Naive thymus-derived CD8-positive, alpha-beta T cell (primary cell): ENCODE measurements at regions of chr19 and their contacts with region 1.

Region 1: DNA sequence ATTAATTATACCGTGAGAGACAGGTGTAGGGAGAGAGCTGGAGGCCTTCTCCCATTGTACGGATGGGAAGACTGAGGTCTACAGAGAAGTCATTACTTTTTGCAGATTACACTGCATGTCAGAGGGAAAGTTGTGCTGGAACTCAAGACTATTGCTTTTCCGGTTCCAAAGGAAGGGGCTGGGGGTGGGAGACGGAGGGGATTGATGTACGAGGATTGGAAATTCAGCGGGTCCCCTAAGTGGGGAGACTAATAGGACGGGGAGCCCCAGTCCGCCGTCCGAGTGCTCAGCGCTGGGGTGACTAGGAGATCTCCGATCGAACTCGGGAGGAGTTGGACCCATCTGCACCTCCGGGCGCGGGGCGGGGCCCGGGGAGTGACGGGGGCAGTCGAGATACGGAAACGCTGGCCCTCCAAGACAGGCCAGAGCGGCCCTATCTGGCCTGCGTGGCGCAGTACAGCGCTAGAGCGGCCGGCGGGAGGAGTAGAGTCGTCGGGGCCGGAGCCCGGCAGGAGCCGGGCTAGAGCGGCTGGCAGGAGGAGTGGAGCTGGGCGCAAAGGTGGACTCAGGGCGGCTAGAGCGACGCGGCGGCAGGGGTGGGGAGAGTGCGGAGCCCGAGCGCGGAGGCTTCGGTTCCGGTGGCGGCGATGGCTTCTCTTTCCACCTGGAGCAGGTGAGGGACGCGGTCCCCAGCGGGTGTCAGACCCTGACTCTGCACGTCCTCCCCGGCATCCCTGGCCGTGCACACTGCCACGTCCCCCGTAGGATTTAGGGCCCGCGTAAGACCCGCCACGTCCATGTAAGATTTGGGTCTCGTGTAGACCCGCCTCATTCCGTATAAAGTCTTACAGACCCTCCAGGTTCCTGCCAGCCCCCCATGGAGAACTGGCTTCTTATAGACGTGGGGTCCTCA is 1.1 kb downstream of the ARHGEF1 start:
- DNase-seq: peak; percentile 72 to 94 (median 84)
- ATAC-seq: peak; percentile 46 to 51
- H3K4me3 Mint-ChIP-seq: peak overlapping the region; percentile 94 to 99 (median 97)
- H3K27ac Mint-ChIP-seq: peak overlapping the region; percentile 94 to 100 (median 99)
- H3K4me1 Mint-ChIP-seq: peaks cover 35 to 72% (median 49%) of the 10 kb centered on the region in 4 donors
- H3K27me3 Mint-ChIP-seq: peaks cover 0 to 1% (median 0%) of the 10 kb centered on the region in 5 donors

Region 2: DNA sequence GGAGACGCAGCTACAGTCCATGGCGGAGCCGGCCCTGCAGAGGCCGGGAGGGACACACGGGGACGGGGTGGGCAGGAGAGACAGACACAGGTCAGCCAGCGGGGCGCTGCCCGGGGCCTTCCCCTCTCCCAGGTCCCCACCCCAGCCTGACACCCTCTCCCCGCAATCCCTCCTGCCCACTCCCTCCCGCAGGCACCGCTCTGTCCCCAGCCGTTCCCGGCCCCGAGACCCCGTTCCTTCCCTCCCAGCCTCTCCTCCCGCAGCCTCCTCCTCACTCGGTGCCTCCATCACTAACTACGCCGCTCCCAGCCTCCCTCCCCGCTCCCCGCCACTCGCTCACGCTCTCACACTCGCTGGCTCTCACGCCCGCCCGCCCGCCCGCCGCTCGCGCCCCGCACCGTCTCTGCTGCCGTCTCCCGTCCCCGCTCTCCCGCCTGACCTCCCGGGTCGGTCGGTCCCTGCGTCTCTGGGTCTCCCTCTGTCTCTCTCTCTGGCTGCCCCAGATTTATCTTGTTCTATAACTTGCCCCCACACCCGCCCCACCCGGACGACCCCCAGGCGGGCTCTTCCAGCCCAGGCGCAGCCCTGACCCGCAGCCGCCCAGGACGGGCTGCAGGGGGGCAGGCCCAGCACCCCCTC is 28.9 kb after region 1 on chr19:
- POLR2A ChIA-PET with region 1: interaction called, 465 read pairs
- DNase-seq: peak in 5 of 10 donors; percentile 31 to 64 (median 38)
- ATAC-seq: peak; percentile 27 to 32
- H3K4me3 Mint-ChIP-seq: peak overlapping the region in 9 of 10 donors; percentile 36 to 86 (median 55)
- H3K27ac Mint-ChIP-seq: peak overlapping the region in 5 of 10 donors; percentile 31 to 92 (median 85)
- H3K4me1 Mint-ChIP-seq: peaks cover 34 to 57% (median 42%) of the 10 kb centered on the region in 4 donors
- H3K27me3 Mint-ChIP-seq: peaks cover 0 to 3% (median 0%) of the 10 kb centered on the region in 5 donors

Region 3: GRCh38 chr19:41934849-41935374 is 50.8 kb after region 1 on chr19:
- POLR2A ChIA-PET with region 1: interaction called, 176 read pairs
- DNase-seq: peak; percentile 64 to 90 (median 76)
- ATAC-seq: peak; percentile 72 to 77
- H3K4me3 Mint-ChIP-seq: peak overlapping the region in 9 of 10 donors; percentile 25 to 78 (median 52)
- H3K27ac Mint-ChIP-seq: peak overlapping the region; percentile 81 to 96 (median 88)
- H3K4me1 Mint-ChIP-seq: peaks cover 41 to 70% (median 61%) of the 10 kb centered on the region in 4 donors
- H3K27me3 Mint-ChIP-seq: peaks cover 0 to 7% (median 0%) of the 10 kb centered on the region in 5 donors

Region 4: GRCh38 chr19:41939861-41940730 is 56.0 kb after region 1 on chr19:
- POLR2A ChIA-PET with region 1: interaction called, 197 read pairs
- DNase-seq: peak in 2 of 10 donors; percentile 34 to 37
- ATAC-seq: peak; percentile 16 to 24
- H3K4me3 Mint-ChIP-seq: peak overlapping the region; percentile 84 to 95 (median 90)
- H3K27ac Mint-ChIP-seq: peak overlapping the region; percentile 78 to 98 (median 93)
- H3K4me1 Mint-ChIP-seq: peaks cover 33 to 65% (median 51%) of the 10 kb centered on the region in 4 donors
- H3K27me3 Mint-ChIP-seq: peaks cover 0 to 4% (median 0%) of the 10 kb centered on the region in 5 donors

Region 5: DNA sequence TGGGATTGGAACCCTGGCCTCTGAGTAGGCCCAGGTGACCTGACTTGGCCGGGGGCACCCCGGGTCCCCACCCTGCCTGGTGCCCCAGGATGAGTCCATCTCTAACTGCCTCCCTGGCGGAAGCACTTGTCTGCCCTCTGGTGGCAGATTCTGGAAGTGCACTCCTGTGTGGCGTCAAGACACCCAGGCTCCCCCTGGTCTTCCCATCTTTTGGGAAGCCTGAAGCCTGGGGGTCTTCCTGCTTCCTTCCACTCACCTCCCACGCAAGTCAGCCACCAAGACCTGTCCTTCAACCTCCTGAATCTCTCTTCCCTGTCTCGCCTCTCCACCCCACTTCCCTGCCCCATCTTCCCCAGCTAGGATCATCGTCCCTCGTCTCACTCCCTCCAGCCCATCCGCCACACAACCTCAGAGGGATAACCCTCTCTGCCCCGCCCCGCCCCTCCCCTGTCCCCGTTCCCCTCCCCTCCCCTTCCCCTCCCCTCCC is 67.7 kb after region 1 on chr19:
- POLR2A ChIA-PET with region 1: interaction called, 197 read pairs
- DNase-seq: peak; percentile 69 to 93 (median 84)
- ATAC-seq: peak; percentile 86 to 88
- H3K4me3 Mint-ChIP-seq: peak overlapping the region in 4 of 10 donors; percentile 22 to 66 (median 43)
- H3K27ac Mint-ChIP-seq: peak overlapping the region; percentile 57 to 97 (median 86)
- H3K4me1 Mint-ChIP-seq: peaks cover 17 to 35% (median 26%) of the 10 kb centered on the region in 4 donors
- H3K27me3 Mint-ChIP-seq: no peaks in the 10 kb centered on the region